ENCODE measurements at regions of chr14 and their contacts with region 1.

Region 1: GRCh38 chr14:71320107-71320733 is 413.0 kb downstream of the PCNX1 start:
- DNase-seq: peak; percentile 99
- ATAC-seq: peak; percentile 97

Region 2: DNA sequence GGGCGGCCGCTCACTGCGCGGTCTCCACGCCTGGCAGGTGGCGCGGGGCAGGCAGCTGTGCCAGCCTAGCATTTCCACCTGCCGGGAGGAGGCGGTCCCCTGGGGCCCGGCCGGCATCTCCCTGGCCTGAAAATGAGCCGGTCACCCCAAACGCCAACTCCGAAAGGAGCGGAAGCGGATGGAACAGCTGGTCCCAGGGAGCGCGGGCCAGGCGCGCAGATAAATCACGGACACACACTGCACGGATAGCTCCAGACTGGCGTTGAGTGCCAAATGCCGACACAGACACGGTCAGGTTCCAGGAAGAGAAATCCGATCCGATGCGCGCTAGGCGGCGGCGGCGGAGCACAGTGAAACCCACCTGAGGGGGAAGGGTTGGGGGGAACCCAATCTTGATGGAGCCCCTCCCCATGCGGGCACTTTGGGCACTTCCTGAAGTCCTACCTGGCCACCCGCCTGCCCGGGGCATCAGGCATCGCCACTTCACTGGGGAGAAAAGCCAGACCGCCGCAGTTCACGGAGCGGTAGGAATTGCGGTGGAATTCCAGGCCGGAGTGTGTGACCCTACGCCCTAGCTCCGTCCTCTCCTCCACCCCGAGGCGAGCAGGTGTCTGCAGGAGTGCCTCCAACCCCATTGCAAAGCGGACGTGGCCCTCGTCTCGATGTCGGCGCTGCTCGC is 1836.3 kb before region 1 on chr14:
- intact Hi-C with region 1: no loop called
- DNase-seq: no peak
- ATAC-seq: peak; percentile 57

Region 3: DNA sequence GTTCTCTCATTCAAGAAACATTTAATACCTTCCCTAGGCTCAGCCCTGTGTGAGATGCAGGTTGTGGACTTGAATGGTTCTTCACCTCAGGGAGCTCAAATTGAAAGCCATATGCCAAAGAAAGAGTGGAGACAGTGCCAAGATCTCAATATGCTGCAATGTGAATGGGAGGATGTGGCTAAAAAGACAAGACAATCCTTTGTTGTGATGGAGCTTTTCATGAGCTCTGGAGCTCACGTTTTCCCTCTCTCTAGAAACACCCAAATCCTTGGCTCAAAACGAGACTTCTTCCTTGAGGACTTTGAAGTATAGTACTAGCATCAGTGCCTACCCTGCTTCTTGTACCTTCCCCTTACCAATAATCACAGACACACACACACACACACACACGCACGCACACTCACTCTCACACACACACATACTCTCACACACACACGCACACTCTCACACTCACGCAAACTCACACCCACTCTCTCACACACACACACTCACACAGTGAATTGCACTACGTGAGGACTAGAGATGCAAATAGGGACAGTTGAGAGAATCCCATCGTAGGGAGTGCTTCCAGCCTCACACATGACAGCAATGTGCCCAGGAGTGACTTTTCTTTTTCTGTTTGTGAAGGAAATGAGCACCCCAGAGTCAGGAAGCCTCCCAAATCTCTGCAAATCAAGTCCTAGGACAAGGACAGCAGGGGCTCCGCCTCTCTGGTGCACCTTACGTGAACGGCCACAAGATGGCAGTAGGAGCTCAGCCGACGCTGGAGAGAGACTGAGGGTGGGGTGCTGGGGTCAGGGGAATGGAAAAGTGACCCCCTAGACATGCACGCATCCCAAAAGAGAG is 181.5 kb before region 1 on chr14:
- intact Hi-C with region 1: loop called (anchors 10 kb)
- DNase-seq: peak; percentile 81
- ATAC-seq: peak; percentile 85

Region 4: DNA sequence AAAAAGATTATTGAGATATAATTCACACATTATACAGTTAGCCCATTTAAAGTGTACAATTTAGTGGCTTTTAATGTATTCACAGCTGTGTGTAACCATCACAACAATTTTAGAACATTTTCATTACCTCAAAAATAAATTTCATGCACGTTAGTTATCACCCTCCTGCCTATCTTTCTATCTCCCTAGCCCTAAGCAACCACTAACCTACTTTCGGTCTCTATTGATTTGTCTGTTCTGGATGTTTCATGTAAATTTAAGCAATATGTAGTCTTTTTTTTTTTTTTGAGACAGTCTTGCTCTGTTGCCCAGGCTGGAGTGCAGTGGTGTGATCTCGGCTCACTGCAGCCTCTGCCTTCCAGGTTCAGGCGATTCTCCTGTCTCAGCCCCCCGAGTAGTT is 26.5 kb after region 1 on chr14:
- intact Hi-C with region 1: no loop called
- DNase-seq: no peak
- ATAC-seq: no peak

Region 5: GRCh38 chr14:71373773-71374172 is 53.6 kb after region 1 on chr14:
- intact Hi-C with region 1: loop called (anchors 2 kb)
- DNase-seq: no peak
- ATAC-seq: no peak

Region 6: GRCh38 chr14:71753126-71753830 is 433.1 kb after region 1 on chr14:
- intact Hi-C with region 1: loop called (anchors 10 kb)
- DNase-seq: peak; percentile 96
- ATAC-seq: peak; percentile 93

Measured in sciatic nerve (tissue), 2 donors.